ENCODE measurements at regions of chr20 and their contacts with region 1.

Region 1: GRCh38 chr20:38893565-38894090 is 32.6 kb upstream of the FAM83D start:
- DNase-seq: peak; percentile 88
- ATAC-seq: peak; percentile 79
- H3K4me3 ChIP-seq: no peak overlapping the region
- H3K4me3 Mint-ChIP-seq: peak overlapping the region; percentile 64
- H3K27ac ChIP-seq: peak overlapping the region; percentile 74 to 78
- H3K27ac Mint-ChIP-seq: peak overlapping the region; percentile 89
- H3K4me1 ChIP-seq: peaks cover 22 to 52% of the 10 kb centered on the region in 2 donors
- H3K4me1 Mint-ChIP-seq: peaks cover 57% of the 10 kb centered on the region
- H3K27me3 ChIP-seq: no peaks in the 10 kb centered on the region
- H3K27me3 Mint-ChIP-seq: no peaks in the 10 kb centered on the region
- CTCF ChIP-seq: peak; percentile 91

Region 2: DNA sequence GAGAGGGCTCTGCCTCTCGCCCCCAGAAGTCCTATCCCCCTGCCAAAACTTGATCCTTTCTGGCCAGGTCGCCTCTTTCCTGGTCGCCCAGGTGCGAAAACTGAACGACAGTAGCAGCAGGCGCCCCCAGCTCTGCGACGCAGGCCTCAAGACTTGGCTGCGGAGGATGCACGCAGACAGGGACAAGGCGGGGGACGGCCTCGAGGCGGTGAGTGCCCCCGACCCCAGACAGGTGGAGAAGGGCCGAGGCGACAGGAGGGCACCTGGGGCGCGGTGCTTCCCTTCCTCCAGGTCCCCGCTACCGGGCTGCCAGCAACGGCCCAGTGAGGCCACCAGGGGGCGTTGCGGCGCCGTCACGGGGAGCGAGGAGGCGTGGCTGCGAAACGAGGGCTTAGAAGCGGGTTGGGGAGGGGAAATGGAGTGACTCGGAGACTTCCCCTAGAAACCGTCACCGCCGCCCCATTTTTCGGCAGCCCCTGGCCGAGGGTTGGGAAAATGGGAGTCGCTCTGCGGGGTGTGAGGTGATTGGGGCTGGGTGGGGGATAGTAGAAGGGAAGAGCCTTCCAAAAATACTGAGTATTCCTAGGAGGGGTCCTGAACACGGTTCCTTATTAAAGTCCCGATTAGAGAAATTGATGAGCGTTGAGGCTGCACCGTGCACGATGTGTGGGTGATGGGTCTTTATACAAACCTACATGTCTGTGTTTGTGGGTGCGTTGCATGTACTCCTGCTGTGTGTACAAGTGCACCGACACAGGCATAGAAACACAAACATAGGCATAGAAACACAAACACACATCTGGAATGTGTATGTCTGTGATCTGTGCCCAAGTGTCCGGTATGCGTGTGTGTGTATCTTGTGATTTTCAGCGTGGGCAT is 247.4 kb before region 1 on chr20:
- CTCF ChIA-PET with region 1: interaction called, 5 read pairs
- POLR2A ChIA-PET with region 1: no interaction called
- intact Hi-C with region 1: loop called (anchors 1 kb)
- DNase-seq: peak; percentile 92
- ATAC-seq: peak; percentile 98
- H3K4me3 ChIP-seq: peak overlapping the region in 4 of 5 experiments; percentile 14 to 42 (median 36)
- H3K4me3 Mint-ChIP-seq: peak overlapping the region; percentile 87
- H3K27ac ChIP-seq: no peak overlapping the region
- H3K27ac Mint-ChIP-seq: no peak overlapping the region
- H3K4me1 ChIP-seq: peaks cover 12 to 13% of the 10 kb centered on the region in 2 donors
- H3K4me1 Mint-ChIP-seq: peaks cover 20% of the 10 kb centered on the region
- H3K27me3 ChIP-seq: peaks cover 0 to 46% (median 21%) of the 10 kb centered on the region in 4 experiments
- H3K27me3 Mint-ChIP-seq: peaks cover 54% of the 10 kb centered on the region
- CTCF ChIP-seq: peak; percentile 99

Region 3: GRCh38 chr20:38674092-38674764 is 219.4 kb before region 1 on chr20:
- CTCF ChIA-PET with region 1: no interaction called
- POLR2A ChIA-PET with region 1: no interaction called
- intact Hi-C with region 1: no loop called
- DNase-seq: peak; percentile 77
- ATAC-seq: peak; percentile 94
- H3K4me3 ChIP-seq: peak overlapping the region; percentile 26 to 68 (median 62)
- H3K4me3 Mint-ChIP-seq: peak overlapping the region; percentile 88
- H3K27ac ChIP-seq: no peak overlapping the region
- H3K27ac Mint-ChIP-seq: peak overlapping the region; percentile 59
- H3K4me1 ChIP-seq: peaks cover 10 to 17% of the 10 kb centered on the region in 2 donors
- H3K4me1 Mint-ChIP-seq: peaks cover 17% of the 10 kb centered on the region
- H3K27me3 ChIP-seq: peaks cover 0 to 47% (median 20%) of the 10 kb centered on the region in 4 experiments
- H3K27me3 Mint-ChIP-seq: peaks cover 38% of the 10 kb centered on the region
- CTCF ChIP-seq: no peak

Region 4: GRCh38 chr20:38790200-38791053 is 103.2 kb before region 1 on chr20:
- CTCF ChIA-PET with region 1: interaction called, 20 read pairs
- POLR2A ChIA-PET with region 1: no interaction called
- intact Hi-C with region 1: no loop called
- DNase-seq: peak; percentile 70
- ATAC-seq: peak; percentile 65
- H3K4me3 ChIP-seq: no peak overlapping the region
- H3K4me3 Mint-ChIP-seq: peak overlapping the region; percentile 50
- H3K27ac ChIP-seq: no peak overlapping the region
- H3K27ac Mint-ChIP-seq: peak overlapping the region; percentile 29
- H3K4me1 ChIP-seq: peaks cover 3 to 4% of the 10 kb centered on the region in 2 donors
- H3K4me1 Mint-ChIP-seq: peaks cover 3% of the 10 kb centered on the region
- H3K27me3 ChIP-seq: no peaks in the 10 kb centered on the region
- H3K27me3 Mint-ChIP-seq: no peaks in the 10 kb centered on the region
- CTCF ChIP-seq: peak; percentile 75

Region 5: GRCh38 chr20:38812182-38812581 is 81.4 kb before region 1 on chr20:
- CTCF ChIA-PET with region 1: interaction called, 141 read pairs
- POLR2A ChIA-PET with region 1: interaction called, 43 read pairs
- intact Hi-C with region 1: no loop called
- DNase-seq: peak; percentile 32
- ATAC-seq: peak; percentile 31
- H3K4me3 ChIP-seq: no peak overlapping the region
- H3K4me3 Mint-ChIP-seq: peak overlapping the region; percentile 51
- H3K27ac ChIP-seq: peak overlapping the region; percentile 30 to 99
- H3K27ac Mint-ChIP-seq: peak overlapping the region; percentile 55
- H3K4me1 ChIP-seq: peaks cover 88 to 90% of the 10 kb centered on the region in 2 donors
- H3K4me1 Mint-ChIP-seq: peaks cover 93% of the 10 kb centered on the region
- H3K27me3 ChIP-seq: no peaks in the 10 kb centered on the region
- H3K27me3 Mint-ChIP-seq: no peaks in the 10 kb centered on the region
- CTCF ChIP-seq: no peak

Region 6: DNA sequence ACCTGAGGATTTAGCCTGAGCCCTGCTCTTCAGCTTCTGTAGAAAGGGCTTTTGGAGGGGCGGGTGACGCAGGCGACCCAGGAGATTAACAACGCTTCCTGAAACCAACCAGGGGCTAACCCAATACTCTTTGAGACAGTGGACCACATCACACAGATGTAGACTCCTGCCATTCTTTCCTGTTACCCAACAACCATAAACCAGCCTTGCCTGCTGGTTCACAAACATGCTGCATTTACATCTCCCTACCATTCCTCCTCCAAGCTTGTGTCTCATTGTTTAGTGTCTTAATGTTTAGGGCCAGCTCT is 59.8 kb before region 1 on chr20:
- CTCF ChIA-PET with region 1: interaction called, 114 read pairs
- POLR2A ChIA-PET with region 1: no interaction called
- intact Hi-C with region 1: loop called (anchors 5 kb)
- DNase-seq: peak; percentile 55
- ATAC-seq: peak; percentile 61
- H3K4me3 ChIP-seq: no peak overlapping the region
- H3K4me3 Mint-ChIP-seq: peak overlapping the region; percentile 59
- H3K27ac ChIP-seq: peak overlapping the region; percentile 42 to 73
- H3K27ac Mint-ChIP-seq: peak overlapping the region; percentile 84
- H3K4me1 ChIP-seq: peaks cover 52 to 76% of the 10 kb centered on the region in 2 donors
- H3K4me1 Mint-ChIP-seq: peaks cover 72% of the 10 kb centered on the region
- H3K27me3 ChIP-seq: no peaks in the 10 kb centered on the region
- H3K27me3 Mint-ChIP-seq: no peaks in the 10 kb centered on the region
- CTCF ChIP-seq: no peak

Region 7: DNA sequence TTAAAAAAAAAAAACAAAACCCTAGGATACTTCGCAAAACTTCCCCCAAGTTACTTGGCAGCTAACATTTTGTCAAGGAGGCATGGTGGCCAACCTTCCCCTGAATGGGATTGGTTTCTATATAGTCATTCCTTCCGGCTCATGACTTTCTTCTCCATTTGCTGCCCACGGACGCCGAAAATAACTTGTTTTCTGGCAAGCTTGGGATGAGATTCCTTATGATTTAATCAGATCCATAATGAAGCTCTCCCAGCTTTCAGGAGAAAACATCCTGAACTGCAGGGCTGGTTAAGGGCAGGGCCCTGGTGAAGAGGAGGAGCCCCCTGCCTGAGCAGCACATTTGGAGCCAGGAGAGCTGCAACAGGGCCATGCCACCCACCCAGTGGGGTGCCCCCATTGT is 38.3 kb before region 1 on chr20:
- CTCF ChIA-PET with region 1: interaction called, 84 read pairs
- POLR2A ChIA-PET with region 1: interaction called, 3 read pairs
- intact Hi-C with region 1: loop called (anchors 1 kb)
- DNase-seq: no peak
- ATAC-seq: no peak
- H3K4me3 ChIP-seq: no peak overlapping the region
- H3K4me3 Mint-ChIP-seq: no peak overlapping the region
- H3K27ac ChIP-seq: peak overlapping the region; percentile 17 to 64
- H3K27ac Mint-ChIP-seq: peak overlapping the region; percentile 34
- H3K4me1 ChIP-seq: peaks cover 74 to 80% of the 10 kb centered on the region in 2 donors
- H3K4me1 Mint-ChIP-seq: peaks cover 87% of the 10 kb centered on the region
- H3K27me3 ChIP-seq: no peaks in the 10 kb centered on the region
- H3K27me3 Mint-ChIP-seq: no peaks in the 10 kb centered on the region
- CTCF ChIP-seq: no peak

Region 8: GRCh38 chr20:38875175-38875993 is 18.2 kb before region 1 on chr20:
- CTCF ChIA-PET with region 1: interaction called, 131 read pairs
- POLR2A ChIA-PET with region 1: interaction called, 37 read pairs
- intact Hi-C with region 1: loop called (anchors 1 kb)
- DNase-seq: peak; percentile 93
- ATAC-seq: peak; percentile 73
- H3K4me3 ChIP-seq: peak overlapping the region in 4 of 5 experiments; percentile 14 to 47 (median 35)
- H3K4me3 Mint-ChIP-seq: peak overlapping the region; percentile 86
- H3K27ac ChIP-seq: peak overlapping the region; percentile 93 to 99
- H3K27ac Mint-ChIP-seq: peak overlapping the region; percentile 100
- H3K4me1 ChIP-seq: peaks cover 97 to 99% of the 10 kb centered on the region in 2 donors
- H3K4me1 Mint-ChIP-seq: peaks cover 94% of the 10 kb centered on the region
- H3K27me3 ChIP-seq: no peaks in the 10 kb centered on the region
- H3K27me3 Mint-ChIP-seq: no peaks in the 10 kb centered on the region
- CTCF ChIP-seq: no peak

Region 9: GRCh38 chr20:38973645-38974044 is 80.0 kb after region 1 on chr20:
- CTCF ChIA-PET with region 1: no interaction called
- POLR2A ChIA-PET with region 1: no interaction called
- intact Hi-C with region 1: no loop called
- DNase-seq: no peak
- ATAC-seq: no peak
- H3K4me3 ChIP-seq: no peak overlapping the region
- H3K4me3 Mint-ChIP-seq: no peak overlapping the region
- H3K27ac ChIP-seq: no peak overlapping the region
- H3K27ac Mint-ChIP-seq: no peak overlapping the region
- H3K4me1 ChIP-seq: no peaks in the 10 kb centered on the region
- H3K4me1 Mint-ChIP-seq: peaks cover 4% of the 10 kb centered on the region
- H3K27me3 ChIP-seq: no peaks in the 10 kb centered on the region
- H3K27me3 Mint-ChIP-seq: no peaks in the 10 kb centered on the region
- CTCF ChIP-seq: no peak

Region 10: DNA sequence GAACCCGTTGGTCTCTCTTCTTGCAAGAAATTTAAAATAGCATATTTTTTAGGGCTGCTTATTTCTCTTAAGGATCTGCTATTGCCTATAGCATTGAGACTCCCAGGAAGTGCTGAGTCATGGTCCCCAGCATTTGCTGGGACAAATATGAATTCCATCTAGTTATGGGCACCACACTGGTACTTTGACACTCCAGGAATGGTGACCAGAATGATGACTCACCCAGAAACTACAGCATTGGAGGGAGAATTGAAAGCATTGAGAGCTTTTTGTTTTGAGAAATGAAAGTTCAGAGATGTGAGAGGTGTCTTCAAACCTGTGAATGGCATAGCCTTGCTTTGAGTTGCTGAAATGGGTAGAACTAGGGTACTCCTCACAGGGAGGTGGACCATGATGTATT is 768.2 kb after region 1 on chr20:
- CTCF ChIA-PET with region 1: no interaction called
- POLR2A ChIA-PET with region 1: no interaction called
- intact Hi-C with region 1: no loop called
- DNase-seq: no peak
- ATAC-seq: no peak
- H3K4me3 ChIP-seq: no peak overlapping the region
- H3K4me3 Mint-ChIP-seq: no peak overlapping the region
- H3K27ac ChIP-seq: no peak overlapping the region
- H3K27ac Mint-ChIP-seq: no peak overlapping the region
- H3K4me1 ChIP-seq: peaks cover 0 to 5% of the 10 kb centered on the region in 2 donors
- H3K4me1 Mint-ChIP-seq: peaks cover 5% of the 10 kb centered on the region
- H3K27me3 ChIP-seq: peaks cover 0 to 3% (median 0%) of the 10 kb centered on the region in 4 experiments
- H3K27me3 Mint-ChIP-seq: peaks cover 16% of the 10 kb centered on the region
- CTCF ChIP-seq: no peak

Region 11: DNA sequence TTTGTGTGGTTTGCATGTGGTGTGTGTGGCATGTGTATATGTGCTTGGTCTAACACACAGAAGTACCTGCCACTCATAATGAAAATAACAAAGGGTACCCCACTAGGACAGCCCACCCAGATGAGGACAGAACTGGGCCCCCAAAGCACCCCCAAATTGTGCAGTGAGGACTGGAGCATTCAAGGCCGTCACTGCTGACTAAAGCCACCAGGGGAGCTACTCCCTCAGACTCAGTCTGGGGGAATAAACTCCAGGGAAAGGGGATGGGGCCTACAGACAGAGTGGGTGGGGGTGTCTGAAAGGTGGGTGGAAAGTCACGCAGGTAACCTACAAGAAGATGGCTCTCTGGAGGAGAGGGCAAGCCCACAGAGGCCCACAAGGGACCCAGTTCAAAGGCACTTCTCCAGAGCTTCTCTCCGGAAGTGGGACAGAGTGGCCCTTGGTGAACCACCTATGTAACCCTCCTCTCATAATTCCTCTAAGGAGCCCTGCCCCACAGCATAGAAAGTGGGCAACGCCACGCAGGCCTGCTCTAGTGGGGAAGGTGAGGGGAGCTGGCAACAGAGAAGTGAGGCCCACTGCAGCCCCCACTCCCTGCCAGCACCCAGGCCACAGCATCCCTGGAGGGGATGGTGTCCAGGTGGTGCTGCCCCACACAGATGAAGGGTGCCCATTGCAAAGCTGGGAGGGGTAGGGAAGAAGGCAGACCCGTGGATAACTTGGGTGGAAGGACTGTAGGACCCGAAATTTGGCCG is 1918.2 kb after region 1 on chr20:
- CTCF ChIA-PET with region 1: no interaction called
- POLR2A ChIA-PET with region 1: no interaction called
- intact Hi-C with region 1: no loop called
- DNase-seq: no peak
- ATAC-seq: no peak
- H3K4me3 ChIP-seq: no peak overlapping the region
- H3K4me3 Mint-ChIP-seq: no peak overlapping the region
- H3K27ac ChIP-seq: no peak overlapping the region
- H3K27ac Mint-ChIP-seq: no peak overlapping the region
- H3K4me1 ChIP-seq: no peaks in the 10 kb centered on the region
- H3K4me1 Mint-ChIP-seq: no peaks in the 10 kb centered on the region
- H3K27me3 ChIP-seq: peaks cover 0 to 2% (median 0%) of the 10 kb centered on the region in 4 experiments
- H3K27me3 Mint-ChIP-seq: peaks cover 13% of the 10 kb centered on the region
- CTCF ChIP-seq: no peak